GM12878 (cell line): ENCODE measurements at regions of chr10 and their contacts with region 1.

Region 1: GRCh38 chr10:108544494-108545120 is 1378.7 kb downstream of the XPNPEP1 start:
- DNase-seq: no peak
- ATAC-seq: peak; percentile 90
- H3K4me3 ChIP-seq: no peak overlapping the region
- H3K27ac ChIP-seq: no peak overlapping the region
- H3K4me1 ChIP-seq: no peaks in the 10 kb centered on the region; the same call in 1 of the 2 replicates
- H3K27me3 ChIP-seq: no peaks in the 10 kb centered on the region
- CTCF ChIP-seq: peak; percentile 79 to 97 (median 92)
- EP300 ChIP-seq: no peak
- POLR2A ChIP-seq: no peak
- RAD21 ChIP-seq: peak; percentile 90

Region 2: DNA sequence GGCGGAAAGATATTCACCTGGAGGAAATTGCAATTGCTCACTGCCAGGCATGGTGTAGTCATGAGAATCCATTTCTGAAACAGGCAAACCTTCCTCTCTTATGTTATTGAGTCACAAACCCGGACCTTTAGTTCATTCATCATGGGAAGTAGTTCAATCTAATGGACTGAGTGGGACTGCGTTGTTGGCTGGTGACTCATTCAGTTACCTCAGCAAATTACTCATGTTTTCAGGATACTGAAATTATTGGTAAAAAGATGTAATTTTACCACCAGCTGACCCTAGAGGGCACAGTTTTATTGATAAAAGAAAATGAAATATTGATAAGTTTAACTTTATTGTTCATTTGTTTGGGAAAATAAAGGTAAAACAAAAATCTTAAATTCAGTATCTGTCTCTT is 185.7 kb before region 1 on chr10:
- CTCF ChIA-PET with region 1: no interaction called
- POLR2A ChIA-PET with region 1: no interaction called
- RAD21 ChIA-PET with region 1: no interaction called
- SMC1A ChIA-PET with region 1: no interaction called
- in situ Hi-C with region 1: no loop called
- intact Hi-C with region 1: loop called (anchors 2 kb)
- DNase-seq: peak; percentile 13
- ATAC-seq: peak; percentile 86
- H3K4me3 ChIP-seq: no peak overlapping the region
- H3K27ac ChIP-seq: no peak overlapping the region
- H3K4me1 ChIP-seq: no peaks in the 10 kb centered on the region
- H3K27me3 ChIP-seq: no peaks in the 10 kb centered on the region
- CTCF ChIP-seq: peak in 1 of 3 experiments; percentile 8; a peak in 1 of 6 replicates
- EP300 ChIP-seq: peak; percentile 32 to 38; a peak in 1 of 4 replicates
- POLR2A ChIP-seq: no peak
- RAD21 ChIP-seq: peak; percentile 1; the same call in 1 of the 2 replicates

Region 3: DNA sequence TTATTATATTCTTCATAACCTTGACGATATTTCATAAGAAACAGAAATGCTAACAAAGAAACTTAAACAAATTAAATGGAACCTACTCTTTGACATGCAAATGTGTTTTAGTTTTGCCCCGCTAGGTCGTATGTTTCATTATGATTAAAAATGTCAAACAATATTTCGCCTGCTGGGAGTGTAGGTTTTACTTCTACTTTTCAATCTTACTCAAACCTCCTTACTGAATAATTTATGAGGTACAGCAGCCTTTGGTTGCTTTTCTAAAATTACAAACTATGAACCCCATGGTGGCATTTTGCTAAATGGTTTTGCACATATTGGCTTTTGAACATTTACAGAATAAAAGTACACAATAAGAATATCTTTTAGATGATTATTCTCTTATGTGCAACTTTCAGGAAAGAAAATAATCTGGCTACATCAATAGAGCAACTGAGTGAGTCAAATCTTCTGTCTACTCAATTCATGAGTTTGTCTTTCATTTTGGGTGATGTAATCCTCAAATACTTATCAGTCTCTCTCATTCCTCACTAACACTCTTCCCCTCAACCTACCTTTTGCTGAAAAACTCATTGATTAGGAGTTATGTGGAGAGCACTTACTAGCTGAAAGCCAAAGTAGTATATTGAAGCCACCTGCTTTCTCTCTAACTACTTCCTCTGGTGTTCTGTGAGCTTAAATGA is 152.3 kb after region 1 on chr10:
- CTCF ChIA-PET with region 1: no interaction called
- POLR2A ChIA-PET with region 1: no interaction called
- RAD21 ChIA-PET with region 1: no interaction called
- SMC1A ChIA-PET with region 1: no interaction called
- in situ Hi-C with region 1: no loop called
- intact Hi-C with region 1: loop called (anchors 5 kb)
- DNase-seq: peak; percentile 40
- ATAC-seq: peak; percentile 95
- H3K4me3 ChIP-seq: 0 out of 2 replicates have a peak overlapping the region, but pooled peaks have one; percentile 1
- H3K27ac ChIP-seq: peak overlapping the region; percentile 74
- H3K4me1 ChIP-seq: peaks cover 12% of the 10 kb centered on the region
- H3K27me3 ChIP-seq: no peaks in the 10 kb centered on the region
- CTCF ChIP-seq: no peak
- EP300 ChIP-seq: peak; percentile 31 to 35; a peak in 2 of 4 replicates
- POLR2A ChIP-seq: no peak
- RAD21 ChIP-seq: no peak

Region 4: DNA sequence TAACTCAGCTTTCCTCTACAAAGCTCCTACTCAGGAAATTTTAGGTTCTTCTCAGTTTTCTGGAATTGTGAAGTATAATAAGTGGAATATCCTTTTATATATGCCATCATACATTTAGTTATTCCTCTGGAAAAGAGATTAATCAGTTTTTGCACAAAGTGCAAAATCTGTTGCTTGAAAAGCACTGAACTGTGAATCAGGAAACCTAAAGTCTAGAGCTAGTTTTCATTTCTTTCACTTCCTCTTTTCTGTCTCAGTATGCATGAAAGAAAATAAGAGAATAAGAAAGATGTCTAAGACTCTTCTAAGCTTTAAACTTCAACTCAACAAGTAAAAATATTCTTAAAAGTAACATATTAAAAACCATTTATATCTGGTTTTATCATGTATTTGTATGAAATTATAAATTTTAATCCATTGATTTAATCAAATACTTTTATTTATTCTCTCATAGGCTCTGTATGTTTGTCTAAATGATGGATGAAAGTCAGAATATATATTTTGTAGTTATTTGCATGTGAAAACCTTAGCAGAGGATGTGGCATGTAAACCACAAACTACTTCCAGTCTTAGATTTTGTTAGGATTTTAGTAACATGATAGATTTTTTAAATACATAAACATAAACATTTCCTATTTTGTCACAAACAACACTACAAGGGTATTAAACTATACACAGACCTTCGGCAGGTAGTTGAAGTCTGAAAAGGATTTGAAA is 305.7 kb after region 1 on chr10:
- CTCF ChIA-PET with region 1: interaction called, 3 read pairs
- POLR2A ChIA-PET with region 1: no interaction called
- RAD21 ChIA-PET with region 1: no interaction called
- SMC1A ChIA-PET with region 1: no interaction called
- in situ Hi-C with region 1: no loop called
- intact Hi-C with region 1: loop called (anchors 5 kb)
- DNase-seq: peak; percentile 27
- ATAC-seq: peak; percentile 88
- H3K4me3 ChIP-seq: peak overlapping the region; percentile 26; the same call in 1 of the 2 replicates
- H3K27ac ChIP-seq: no peak overlapping the region
- H3K4me1 ChIP-seq: peaks cover 16% of the 10 kb centered on the region
- H3K27me3 ChIP-seq: no peaks in the 10 kb centered on the region
- CTCF ChIP-seq: no peak
- EP300 ChIP-seq: peak in 1 of 2 experiments; percentile 64; a peak in 2 of 4 replicates
- POLR2A ChIP-seq: no peak
- RAD21 ChIP-seq: no peak